Dendritic cell treated with granulocyte-macrophage colony-stimulating factor and Interleukin-4, amounts not matched to agents 40 ng/mL and 50 ng/mL, for 4 days (primary cell): ENCODE measurements at regions of chr16 and their contacts with region 1.

Region 1: DNA sequence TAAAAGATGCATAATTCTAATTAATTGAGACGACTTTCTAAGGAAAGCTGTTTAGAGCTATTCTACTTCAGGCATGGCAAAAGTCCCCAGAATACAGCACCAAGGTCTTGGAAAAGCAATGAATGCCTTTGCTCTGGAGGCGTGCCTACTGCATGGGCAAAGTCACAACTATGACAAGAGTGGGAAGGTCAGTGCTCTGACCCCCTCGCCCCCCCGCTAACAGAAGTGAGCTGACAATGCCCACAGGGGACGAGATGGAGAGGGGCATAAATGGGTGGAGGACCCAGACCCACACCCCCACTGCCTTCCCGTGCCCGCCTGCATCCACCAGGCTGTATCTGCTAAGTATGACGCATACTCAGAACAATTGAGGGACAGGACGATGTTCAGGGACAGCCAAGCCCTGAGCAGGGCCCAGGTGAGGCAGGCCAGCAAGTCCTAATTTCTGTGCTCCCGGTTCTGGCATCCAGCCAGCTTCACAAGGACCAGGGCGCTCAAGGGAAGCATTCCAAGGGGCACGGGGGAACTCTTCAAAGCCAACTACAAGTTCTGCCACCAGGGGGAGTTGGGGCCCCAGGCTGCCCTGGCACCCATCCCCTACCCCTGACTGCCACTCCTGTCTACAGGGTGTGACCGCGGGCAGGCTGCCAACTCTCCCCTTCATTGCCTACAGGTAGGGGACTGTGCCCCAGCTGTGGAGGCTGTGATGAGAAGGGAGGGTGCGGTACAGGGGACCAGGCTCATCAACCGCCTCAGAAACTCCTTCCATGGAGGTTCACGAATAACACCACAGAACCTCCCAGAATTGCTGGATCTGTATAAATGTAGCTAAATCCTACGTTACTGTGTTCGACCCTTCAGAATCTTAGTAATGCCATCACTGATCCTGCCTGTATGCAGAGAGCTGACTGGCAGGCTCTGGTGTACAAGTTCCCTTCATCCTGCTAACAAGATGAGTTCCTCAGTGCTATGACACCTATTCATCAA is 20.8 kb downstream of the NPRL3 start:
- H3K4me3 Mint-ChIP-seq: no peak overlapping the region
- H3K27ac Mint-ChIP-seq: no peak overlapping the region
- H3K4me1 Mint-ChIP-seq: peaks cover 15% of the 10 kb centered on the region
- H3K27me3 Mint-ChIP-seq: no peaks in the 10 kb centered on the region

Region 2: DNA sequence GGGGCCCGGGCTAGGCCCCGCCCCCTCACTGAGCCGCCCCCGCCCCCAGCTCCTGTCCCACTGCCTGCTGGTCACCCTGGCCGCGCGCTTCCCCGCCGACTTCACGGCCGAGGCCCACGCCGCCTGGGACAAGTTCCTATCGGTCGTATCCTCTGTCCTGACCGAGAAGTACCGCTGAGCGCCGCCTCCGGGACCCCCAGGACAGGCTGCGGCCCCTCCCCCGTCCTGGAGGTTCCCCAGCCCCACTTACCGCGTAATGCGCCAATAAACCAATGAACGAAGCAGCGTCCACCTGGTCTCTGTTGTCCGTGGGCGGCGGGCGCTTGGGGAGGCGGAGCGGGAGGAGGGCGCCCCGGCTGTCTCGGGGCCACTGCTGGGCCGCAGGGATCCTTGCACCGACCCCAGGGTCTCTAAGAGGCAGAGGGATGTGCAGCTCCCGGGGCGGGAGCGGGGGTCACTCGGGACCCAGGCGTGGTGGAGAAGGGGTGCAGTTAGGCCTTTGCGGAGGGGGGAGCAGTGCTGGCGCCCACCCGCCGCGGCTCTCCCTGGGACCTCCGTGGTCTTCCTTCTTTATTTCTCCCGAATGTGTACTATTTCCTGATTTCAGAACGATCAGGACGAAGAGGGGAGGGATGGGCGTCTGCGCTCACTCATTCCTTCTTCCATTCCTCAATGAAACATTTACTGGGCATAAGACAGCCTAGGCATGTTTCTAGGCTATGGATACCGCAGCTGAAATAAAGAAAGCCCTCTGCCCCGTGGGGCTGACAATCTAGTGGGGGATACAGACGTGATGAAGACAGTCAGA is 36.8 kb after region 1 on chr16:
- intact Hi-C with region 1: no loop called
- H3K4me3 Mint-ChIP-seq: peak overlapping the region; percentile 77
- H3K27ac Mint-ChIP-seq: peak overlapping the region; percentile 63
- H3K4me1 Mint-ChIP-seq: peaks cover 12% of the 10 kb centered on the region
- H3K27me3 Mint-ChIP-seq: peaks cover 69% of the 10 kb centered on the region

Region 3: GRCh38 chr16:180938-181667 is 63.4 kb after region 1 on chr16:
- intact Hi-C with region 1: loop called (anchors 1 kb)
- H3K4me3 Mint-ChIP-seq: peak overlapping the region; percentile 46
- H3K27ac Mint-ChIP-seq: no peak overlapping the region
- H3K4me1 Mint-ChIP-seq: no peaks in the 10 kb centered on the region
- H3K27me3 Mint-ChIP-seq: peaks cover 42% of the 10 kb centered on the region

Region 4: GRCh38 chr16:361872-362701 is 244.4 kb after region 1 on chr16:
- intact Hi-C with region 1: loop called (anchors 2 kb)
- H3K4me3 Mint-ChIP-seq: no peak overlapping the region
- H3K27ac Mint-ChIP-seq: no peak overlapping the region
- H3K4me1 Mint-ChIP-seq: peaks cover 16% of the 10 kb centered on the region
- H3K27me3 Mint-ChIP-seq: peaks cover 23% of the 10 kb centered on the region